Breast epithelium (tissue), 4 donors: ENCODE measurements at regions of chr1 and their contacts with region 1.

Region 1: DNA sequence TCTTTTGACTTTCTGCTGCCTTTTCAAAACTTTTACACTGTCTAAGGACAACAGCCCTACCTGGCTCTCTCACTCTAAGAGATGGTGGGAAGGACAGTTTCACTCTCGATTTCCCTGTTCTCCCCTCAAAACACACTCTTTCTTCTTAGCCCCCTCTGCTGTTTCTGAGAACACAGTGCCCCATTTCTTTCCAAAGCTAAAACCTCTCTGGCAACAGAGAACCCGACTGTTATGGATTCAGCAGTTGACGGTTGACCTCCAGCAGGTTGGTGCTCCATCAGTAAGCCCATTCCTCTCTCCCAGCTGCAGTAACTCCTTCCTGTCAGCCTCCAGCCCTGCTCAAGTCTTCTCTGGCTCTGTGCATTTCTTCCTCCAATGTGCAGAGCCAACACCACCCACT is 88.2 kb upstream of the ABCD3 start:
- DNase-seq: no peak
- H3K4me3 ChIP-seq: no peak overlapping the region
- H3K27ac ChIP-seq: no peak overlapping the region
- H3K4me1 ChIP-seq: peaks cover 0 to 3% of the 10 kb centered on the region in 2 donors
- H3K27me3 ChIP-seq: no peaks in the 10 kb centered on the region
- CTCF ChIP-seq: peak in 1 of 3 donors; percentile 36
- POLR2A ChIP-seq: no peak

Region 2: DNA sequence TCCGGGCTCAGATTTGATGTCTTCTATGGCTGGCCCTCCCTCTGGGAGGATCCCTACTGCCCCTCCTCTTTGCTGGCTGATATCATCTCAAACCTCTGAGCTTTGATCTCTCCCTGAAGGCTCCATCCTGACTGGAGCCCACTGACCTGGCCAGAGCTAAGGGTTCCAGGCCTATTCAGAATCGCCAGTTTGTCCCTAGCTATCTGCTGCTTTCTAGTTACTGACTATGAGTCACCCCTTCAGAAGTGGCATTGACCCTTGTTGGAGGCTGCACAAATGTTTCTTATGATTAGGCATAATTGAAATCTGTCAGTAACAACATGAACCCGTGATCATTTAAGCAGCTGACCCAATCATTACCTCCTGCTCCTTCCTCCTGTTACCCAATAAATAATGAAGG is 296.1 kb before region 1 on chr1:
- intact Hi-C with region 1: loop called (anchors 5 kb)
- DNase-seq: no peak
- H3K4me3 ChIP-seq: no peak overlapping the region
- H3K27ac ChIP-seq: no peak overlapping the region
- H3K4me1 ChIP-seq: no peaks in the 10 kb centered on the region
- H3K27me3 ChIP-seq: no peaks in the 10 kb centered on the region
- CTCF ChIP-seq: no peak
- POLR2A ChIP-seq: no peak

Region 3: GRCh38 chr1:94258873-94259331 is 71.1 kb before region 1 on chr1:
- intact Hi-C with region 1: loop called (anchors 10 kb)
- DNase-seq: peak; percentile 66 to 87
- H3K4me3 ChIP-seq: no peak overlapping the region
- H3K27ac ChIP-seq: peak overlapping the region; percentile 88
- H3K4me1 ChIP-seq: peaks cover 3 to 10% of the 10 kb centered on the region in 2 donors
- H3K27me3 ChIP-seq: no peaks in the 10 kb centered on the region
- CTCF ChIP-seq: no peak
- POLR2A ChIP-seq: no peak

Region 4: DNA sequence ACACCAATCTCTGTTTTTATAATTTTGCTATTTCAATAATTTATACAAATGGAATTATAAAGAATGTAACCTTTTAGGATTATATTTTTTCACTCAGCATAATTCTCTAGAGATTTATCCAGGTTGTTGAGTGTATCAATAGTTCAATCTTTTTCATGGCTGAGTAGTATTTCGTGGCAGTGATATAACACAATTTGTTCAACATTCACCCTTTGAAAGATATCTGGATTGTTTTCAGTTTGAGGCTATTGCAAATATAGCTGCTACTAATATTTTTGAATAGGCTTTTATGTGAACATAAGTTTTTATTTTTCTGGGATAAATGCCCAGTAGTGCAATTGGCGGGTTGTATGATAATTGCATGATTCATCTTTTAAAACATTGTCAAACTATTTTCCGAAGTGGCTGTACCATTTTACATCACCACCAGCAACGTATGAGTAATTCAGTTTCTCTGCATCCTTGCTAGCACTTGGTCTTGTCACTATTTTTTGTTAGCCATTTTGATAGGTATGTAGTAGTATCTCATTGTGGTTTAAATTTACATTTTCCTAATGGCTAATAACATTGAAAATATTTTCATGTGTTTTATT is 32.6 kb after region 1 on chr1:
- intact Hi-C with region 1: no loop called
- DNase-seq: no peak
- H3K4me3 ChIP-seq: no peak overlapping the region
- H3K27ac ChIP-seq: no peak overlapping the region
- H3K4me1 ChIP-seq: no peaks in the 10 kb centered on the region
- H3K27me3 ChIP-seq: no peaks in the 10 kb centered on the region
- CTCF ChIP-seq: no peak
- POLR2A ChIP-seq: no peak